Endothelial cell of umbilical vein (primary cell): ENCODE measurements at regions of chr5 and their contacts with region 1.

Region 1: GRCh38 chr5:57166276-57166675 is 7.6 kb upstream of the GPBP1 start:
- DNase-seq: no peak
- H3K4me3 ChIP-seq: no peak overlapping the region
- H3K27ac ChIP-seq: no peak overlapping the region
- H3K4me1 ChIP-seq: no peaks in the 10 kb centered on the region
- H3K27me3 ChIP-seq: peaks cover 0 to under 1% of the 10 kb centered on the region in 2 experiments
- CTCF ChIP-seq: no peak
- POLR2A ChIP-seq: no peak

Region 2: GRCh38 chr5:58002318-58002717 is 836.0 kb after region 1 on chr5:
- CTCF ChIA-PET with region 1: no interaction called
- POLR2A ChIA-PET with region 1: no interaction called
- dilution Hi-C with region 1: no loop called
- intact Hi-C with region 1: loop called (anchors 10 kb)
- DNase-seq: peak; percentile 17
- H3K4me3 ChIP-seq: no peak overlapping the region
- H3K27ac ChIP-seq: no peak overlapping the region
- H3K4me1 ChIP-seq: peaks cover 6% of the 10 kb centered on the region
- H3K27me3 ChIP-seq: no peaks in the 10 kb centered on the region
- CTCF ChIP-seq: no peak
- POLR2A ChIP-seq: no peak